ENCODE measurements at regions of chr18 and their contacts with region 1.

Region 1: DNA sequence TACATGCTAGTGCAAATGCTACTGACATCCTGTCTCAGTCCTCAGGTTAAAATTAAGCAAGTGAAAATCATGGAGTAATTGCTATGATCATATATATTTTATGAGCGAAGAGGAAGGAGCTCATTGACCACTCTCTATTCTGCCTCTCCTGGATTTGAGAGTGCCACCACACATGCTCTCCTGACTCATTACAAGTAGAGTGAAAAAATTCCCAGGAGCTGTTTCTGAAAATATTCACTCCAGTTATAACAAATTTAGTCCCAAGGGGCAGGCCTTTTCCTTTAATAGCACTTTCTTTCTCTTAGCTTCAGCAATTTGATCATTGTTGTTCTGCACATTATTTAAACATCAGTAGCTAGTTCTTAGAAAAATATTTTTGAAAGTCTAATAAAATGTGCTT is 155.0 kb upstream of the MAPRE2 start:
- DNase-seq: no peak
- ATAC-seq: peak; percentile 61
- H3K4me3 ChIP-seq: peak overlapping the region in 1 of 2 donors; percentile 16
- H3K27ac ChIP-seq: no peak overlapping the region
- H3K4me1 ChIP-seq: peaks cover 7 to 8% of the 10 kb centered on the region in 2 donors
- H3K27me3 ChIP-seq: no peaks in the 10 kb centered on the region

Region 2: GRCh38 chr18:34837769-34838272 is 48.4 kb before region 1 on chr18:
- intact Hi-C with region 1: loop called in 1 of 2 experiments (anchors 5 kb)
- DNase-seq: no peak
- ATAC-seq: peak; percentile 51
- H3K4me3 ChIP-seq: no peak overlapping the region
- H3K27ac ChIP-seq: peak overlapping the region; percentile 60 to 78
- H3K4me1 ChIP-seq: peaks cover 5 to 7% of the 10 kb centered on the region in 2 donors
- H3K27me3 ChIP-seq: no peaks in the 10 kb centered on the region